Activated CD4-positive, alpha-beta memory T cell treated with anti-CD3 and anti-CD28 coated beads for 36 hours (primary cell): ENCODE measurements at regions of chr5 and their contacts with region 1.

Region 1: GRCh38 chr5:6576861-6577501 is 55.9 kb downstream of the NSUN2 start:
- DNase-seq: peak; percentile 26
- H3K4me3 Mint-ChIP-seq: no peak overlapping the region
- H3K27ac Mint-ChIP-seq: no peak overlapping the region
- H3K4me1 Mint-ChIP-seq: no peaks in the 10 kb centered on the region
- H3K27me3 Mint-ChIP-seq: peaks cover 29% of the 10 kb centered on the region

Region 2: GRCh38 chr5:6291961-6292360 is 285.0 kb before region 1 on chr5:
- CTCF ChIA-PET with region 1: interaction called, 3 read pairs
- POLR2A ChIA-PET with region 1: no interaction called
- intact Hi-C with region 1: loop called (anchors 2 kb)
- DNase-seq: no peak
- H3K4me3 Mint-ChIP-seq: no peak overlapping the region
- H3K27ac Mint-ChIP-seq: no peak overlapping the region
- H3K4me1 Mint-ChIP-seq: no peaks in the 10 kb centered on the region
- H3K27me3 Mint-ChIP-seq: no peaks in the 10 kb centered on the region

Region 3: DNA sequence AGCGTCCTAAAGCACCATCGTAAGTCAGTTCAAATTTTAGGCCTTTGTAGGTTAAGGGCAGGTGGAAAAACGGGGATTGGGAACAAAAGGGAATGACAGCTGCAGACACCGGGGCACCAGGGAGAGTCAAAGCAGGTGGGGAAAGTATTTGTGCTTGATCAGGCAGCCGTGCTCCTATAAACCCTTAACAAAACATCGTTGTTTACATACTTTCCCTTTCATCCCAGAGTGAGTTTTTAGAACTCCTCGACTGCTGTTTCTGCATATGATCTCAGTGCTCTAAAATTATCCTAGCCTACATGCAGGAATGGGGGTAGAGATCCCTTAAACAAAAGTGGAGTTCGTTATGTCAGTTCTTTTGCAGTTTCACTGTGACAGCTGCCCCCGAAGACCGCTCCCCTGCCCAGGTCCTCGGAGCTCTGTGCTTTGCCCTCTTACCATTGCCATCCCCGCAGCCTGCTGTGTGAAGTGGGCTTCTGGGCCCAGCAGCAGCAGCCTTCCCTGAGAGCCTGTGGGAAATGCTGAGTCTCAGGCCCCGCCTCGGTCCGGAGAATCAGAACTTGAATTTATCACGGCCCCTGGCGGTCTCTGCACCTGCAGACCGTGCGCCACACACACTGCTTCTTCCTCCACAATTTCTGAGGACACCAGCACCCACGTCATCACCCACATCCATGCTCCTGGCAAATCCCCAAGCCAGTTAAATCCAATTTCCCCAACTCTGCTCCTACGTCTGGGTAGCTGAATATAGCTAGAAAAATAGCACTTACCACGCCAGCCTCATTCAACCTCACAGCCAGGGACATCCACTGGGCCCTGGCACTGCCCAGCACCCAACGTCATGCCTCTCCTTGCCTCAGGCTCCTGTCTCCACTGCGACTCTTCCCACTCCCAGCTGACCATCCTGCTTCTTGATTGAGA is 31.0 kb before region 1 on chr5:
- CTCF ChIA-PET with region 1: no interaction called
- POLR2A ChIA-PET with region 1: no interaction called
- intact Hi-C with region 1: no loop called
- DNase-seq: no peak
- H3K4me3 Mint-ChIP-seq: no peak overlapping the region
- H3K27ac Mint-ChIP-seq: no peak overlapping the region
- H3K4me1 Mint-ChIP-seq: no peaks in the 10 kb centered on the region
- H3K27me3 Mint-ChIP-seq: peaks cover 2% of the 10 kb centered on the region

Region 4: GRCh38 chr5:6565492-6565891 is 11.5 kb before region 1 on chr5:
- CTCF ChIA-PET with region 1: no interaction called
- POLR2A ChIA-PET with region 1: no interaction called
- intact Hi-C with region 1: no loop called
- DNase-seq: no peak
- H3K4me3 Mint-ChIP-seq: no peak overlapping the region
- H3K27ac Mint-ChIP-seq: no peak overlapping the region
- H3K4me1 Mint-ChIP-seq: no peaks in the 10 kb centered on the region
- H3K27me3 Mint-ChIP-seq: peaks cover 22% of the 10 kb centered on the region